Breast epithelium (tissue), 4 donors: ENCODE measurements at regions of chr11 and their contacts with region 1.

Region 1: GRCh38 chr11:104772806-104773241 is 125.4 kb downstream of the CASP12 start:
- DNase-seq: no peak
- H3K4me3 ChIP-seq: no peak overlapping the region
- H3K27ac ChIP-seq: peak overlapping the region; percentile 72 to 77
- H3K4me1 ChIP-seq: peaks cover 0 to 3% of the 10 kb centered on the region in 2 donors
- H3K27me3 ChIP-seq: no peaks in the 10 kb centered on the region
- CTCF ChIP-seq: no peak
- POLR2A ChIP-seq: no peak

Region 2: DNA sequence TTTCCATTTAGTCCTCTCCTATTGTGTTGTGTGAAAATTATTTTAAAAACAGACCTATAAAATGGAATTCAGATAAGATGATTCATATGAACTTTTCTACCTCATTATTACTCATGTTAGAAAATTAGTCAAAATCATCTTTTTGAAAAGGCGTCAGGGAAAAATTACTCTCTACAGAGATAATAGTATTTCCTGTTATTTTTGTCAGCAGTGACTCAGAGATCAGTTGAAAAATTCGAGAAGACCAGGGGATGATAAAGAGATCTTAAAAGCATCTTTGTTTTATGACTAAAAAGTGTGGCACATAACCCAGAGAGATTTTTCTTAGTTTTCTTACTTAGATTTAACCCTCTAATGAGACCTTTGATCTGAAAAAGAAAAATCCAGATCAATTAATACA is 524.6 kb after region 1 on chr11:
- intact Hi-C with region 1: loop called (anchors 5 kb)
- DNase-seq: no peak
- H3K4me3 ChIP-seq: no peak overlapping the region
- H3K27ac ChIP-seq: no peak overlapping the region
- H3K4me1 ChIP-seq: no peaks in the 10 kb centered on the region
- H3K27me3 ChIP-seq: no peaks in the 10 kb centered on the region
- CTCF ChIP-seq: no peak
- POLR2A ChIP-seq: no peak